Activated naive CD4-positive, alpha-beta T cell treated with anti-CD3 and anti-CD28 coated beads for 36 hours (primary cell): ENCODE measurements at regions of chr19 and their contacts with region 1.

Region 1: GRCh38 chr19:11587302-11587974 is 9.8 kb upstream of the ZNF627 start:
- DNase-seq: peak; percentile 90
- H3K4me3 Mint-ChIP-seq: no peak overlapping the region
- H3K27ac Mint-ChIP-seq: no peak overlapping the region
- H3K4me1 Mint-ChIP-seq: peaks cover 5% of the 10 kb centered on the region
- H3K27me3 Mint-ChIP-seq: no peaks in the 10 kb centered on the region

Region 2: GRCh38 chr19:11293433-11294389 is 293.7 kb before region 1 on chr19:
- CTCF ChIA-PET with region 1: no interaction called
- intact Hi-C with region 1: loop called (anchors 5 kb)
- DNase-seq: peak; percentile 90
- H3K4me3 Mint-ChIP-seq: peak overlapping the region; percentile 66
- H3K27ac Mint-ChIP-seq: no peak overlapping the region
- H3K4me1 Mint-ChIP-seq: peaks cover 9% of the 10 kb centered on the region
- H3K27me3 Mint-ChIP-seq: peaks cover 8% of the 10 kb centered on the region

Region 3: DNA sequence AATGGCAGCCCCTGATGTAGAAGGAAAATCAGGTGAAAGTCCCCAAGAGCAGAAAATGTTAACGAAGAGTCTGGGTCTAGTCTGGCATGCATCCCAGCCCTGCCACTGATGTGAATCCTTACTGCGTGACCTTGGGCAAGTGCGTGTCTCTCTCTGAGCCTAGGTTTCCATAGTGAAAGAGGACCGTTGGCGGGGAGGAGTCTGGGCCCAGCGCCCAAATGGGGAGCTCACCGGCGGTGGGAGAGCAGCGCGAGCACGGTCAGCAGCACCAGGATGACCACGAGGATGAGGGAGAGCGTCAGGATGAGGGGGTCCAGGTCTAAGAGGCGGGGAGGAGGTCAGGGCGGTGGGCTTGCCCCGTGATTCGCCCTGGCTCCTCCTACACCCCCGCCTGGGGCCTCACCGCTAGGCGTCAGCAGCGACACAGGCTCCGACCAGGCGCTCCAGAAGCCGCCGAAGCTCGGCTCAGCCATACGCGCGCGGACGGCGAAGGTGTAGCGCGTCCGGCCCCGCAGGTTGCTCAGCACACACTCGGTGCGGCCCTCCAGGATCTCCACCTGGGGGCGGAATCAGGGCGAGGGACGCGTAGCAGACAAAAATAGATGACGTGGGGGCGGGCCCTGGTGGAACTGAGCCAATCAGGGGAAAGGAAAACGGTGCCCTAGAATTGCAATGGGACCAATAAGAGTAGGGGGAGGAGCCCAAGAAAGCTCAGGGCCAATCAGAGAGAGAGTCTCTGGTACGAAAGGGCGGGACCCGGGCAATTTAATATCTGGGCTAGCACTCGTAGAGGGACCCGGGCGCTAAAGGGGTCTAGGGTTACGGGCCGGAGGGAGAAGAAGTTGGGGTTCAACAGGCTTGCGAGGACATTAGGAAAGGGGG is 206.5 kb before region 1 on chr19:
- CTCF ChIA-PET with region 1: no interaction called
- intact Hi-C with region 1: loop called (anchors 2 kb)
- DNase-seq: peak; percentile 98
- H3K4me3 Mint-ChIP-seq: peak overlapping the region; percentile 85
- H3K27ac Mint-ChIP-seq: peak overlapping the region; percentile 92
- H3K4me1 Mint-ChIP-seq: peaks cover 52% of the 10 kb centered on the region
- H3K27me3 Mint-ChIP-seq: peaks cover 8% of the 10 kb centered on the region

Region 4: DNA sequence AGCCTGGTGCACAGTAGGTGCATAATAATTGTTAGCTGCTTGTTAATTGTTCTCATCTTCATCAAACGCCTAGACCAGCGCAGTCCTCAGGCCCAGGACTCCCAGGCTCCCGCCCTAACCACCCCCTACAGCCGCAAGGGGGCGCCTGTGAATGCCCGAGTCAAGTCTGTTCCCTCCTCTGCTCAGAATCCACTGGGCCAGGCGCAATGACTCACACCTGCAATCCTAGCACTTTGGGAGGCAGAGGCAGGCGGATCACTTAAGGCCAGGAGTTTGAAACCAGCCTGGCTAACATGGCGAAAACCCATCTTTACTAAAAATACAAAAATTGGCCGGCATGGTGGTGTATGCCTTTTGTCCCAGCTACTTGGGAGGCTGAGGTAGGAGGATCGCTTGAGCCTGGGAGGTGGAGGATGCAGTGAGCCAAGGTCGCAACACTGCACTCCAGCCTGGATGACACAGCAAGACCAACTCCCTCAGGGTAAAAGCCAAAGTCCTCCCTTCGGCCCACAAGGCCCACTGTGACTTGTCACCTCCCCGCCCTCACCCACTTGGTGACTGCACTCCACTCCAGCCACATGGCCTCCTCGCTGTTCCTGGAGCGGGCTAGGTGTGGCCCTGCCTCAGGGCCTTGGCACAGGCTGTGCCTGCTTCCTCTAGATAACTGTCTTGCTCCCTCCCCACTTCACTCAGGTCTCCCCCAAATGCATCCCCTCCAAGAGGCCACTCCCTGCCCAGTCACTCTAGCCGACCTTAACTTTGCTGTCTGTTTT is 90.9 kb before region 1 on chr19:
- CTCF ChIA-PET with region 1: no interaction called
- intact Hi-C with region 1: loop called (anchors 1 kb)
- DNase-seq: peak; percentile 74
- H3K4me3 Mint-ChIP-seq: no peak overlapping the region
- H3K27ac Mint-ChIP-seq: no peak overlapping the region
- H3K4me1 Mint-ChIP-seq: no peaks in the 10 kb centered on the region
- H3K27me3 Mint-ChIP-seq: no peaks in the 10 kb centered on the region

Region 5: GRCh38 chr19:11528551-11529341 is 58.7 kb before region 1 on chr19 and contains the start of gene ECSIT:
- CTCF ChIA-PET with region 1: interaction called, 3 read pairs
- intact Hi-C with region 1: loop called (anchors 2 kb)
- DNase-seq: peak; percentile 97
- H3K4me3 Mint-ChIP-seq: peak within 1 kb of the TSS; percentile 97
- H3K27ac Mint-ChIP-seq: peak within 1 kb of the TSS; percentile 90
- H3K4me1 Mint-ChIP-seq: peaks cover 26% of the 10 kb centered on the region
- H3K27me3 Mint-ChIP-seq: no peaks in the 10 kb centered on the region
- total RNA-seq, gene ECSIT: 42.6 to 46.0 TPM

Region 6: GRCh38 chr19:11535792-11536595 is 51.4 kb before region 1 on chr19:
- CTCF ChIA-PET with region 1: interaction called, 8 read pairs
- intact Hi-C with region 1: loop called (anchors 1 kb)
- DNase-seq: peak; percentile 87
- H3K4me3 Mint-ChIP-seq: no peak overlapping the region
- H3K27ac Mint-ChIP-seq: no peak overlapping the region
- H3K4me1 Mint-ChIP-seq: peaks cover 19% of the 10 kb centered on the region
- H3K27me3 Mint-ChIP-seq: peaks cover 16% of the 10 kb centered on the region

Region 7: DNA sequence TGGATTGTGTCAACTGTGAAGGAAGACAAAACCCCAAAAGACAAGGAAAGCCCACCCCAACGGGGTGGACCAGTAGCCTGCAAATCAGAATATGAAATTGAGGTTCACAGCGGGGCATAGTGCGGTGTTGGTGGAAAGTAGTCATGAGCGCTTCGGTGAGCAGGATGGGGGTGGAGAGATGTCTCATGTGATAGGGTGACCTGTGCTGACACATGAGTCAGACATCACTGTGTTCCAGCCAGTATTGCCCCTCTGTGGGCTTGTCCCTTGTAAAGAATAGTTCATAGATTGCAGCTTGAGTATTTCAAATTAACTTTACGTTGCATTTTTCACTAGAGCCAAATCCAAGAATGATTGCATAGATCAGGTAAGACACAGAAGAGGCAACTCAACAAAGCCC is 307.4 kb after region 1 on chr19:
- CTCF ChIA-PET with region 1: no interaction called
- intact Hi-C with region 1: no loop called
- DNase-seq: no peak
- H3K4me3 Mint-ChIP-seq: no peak overlapping the region
- H3K27ac Mint-ChIP-seq: no peak overlapping the region
- H3K4me1 Mint-ChIP-seq: no peaks in the 10 kb centered on the region
- H3K27me3 Mint-ChIP-seq: no peaks in the 10 kb centered on the region